Left ventricle myocardium inferior (tissue), 1 donor: ENCODE measurements at regions of chr3 and their contacts with region 1.

Region 1: DNA sequence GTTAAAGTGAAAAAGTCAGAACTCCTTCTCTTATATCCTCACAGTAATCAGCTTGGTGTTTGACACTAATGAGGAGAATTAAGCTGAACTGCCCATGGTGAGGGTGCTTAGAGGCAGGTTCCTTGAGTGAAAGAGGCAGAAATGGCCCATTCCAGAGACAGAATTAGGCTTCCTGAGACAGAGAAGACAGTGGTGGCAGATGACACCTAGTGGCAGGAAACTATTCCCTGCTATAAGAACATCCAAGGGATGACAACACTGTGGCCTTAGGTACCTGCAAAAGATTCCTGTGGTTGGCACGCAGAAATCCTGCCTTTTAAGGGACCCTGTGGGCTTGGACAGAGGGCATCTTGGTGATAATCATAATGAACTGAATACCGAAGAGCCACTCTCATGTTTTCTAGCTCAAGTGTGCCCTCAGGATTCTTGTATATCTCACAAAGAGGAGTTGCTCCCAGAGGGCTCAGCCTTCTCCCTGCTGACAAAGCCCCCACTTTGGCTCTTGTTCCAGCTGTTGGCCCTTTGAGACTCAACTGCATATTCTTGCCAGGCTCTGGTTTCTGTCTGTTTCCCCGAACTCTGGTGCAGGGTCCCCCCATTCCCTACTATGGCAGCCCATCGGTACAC is 56.0 kb downstream of the KBTBD12 start:
- DNase-seq: no peak
- H3K4me3 ChIP-seq: no peak overlapping the region
- H3K27ac ChIP-seq: no peak overlapping the region
- H3K4me1 ChIP-seq: peaks cover 8% of the 10 kb centered on the region
- H3K27me3 ChIP-seq: no peaks in the 10 kb centered on the region
- CTCF ChIP-seq: peak; percentile 79

Region 2: DNA sequence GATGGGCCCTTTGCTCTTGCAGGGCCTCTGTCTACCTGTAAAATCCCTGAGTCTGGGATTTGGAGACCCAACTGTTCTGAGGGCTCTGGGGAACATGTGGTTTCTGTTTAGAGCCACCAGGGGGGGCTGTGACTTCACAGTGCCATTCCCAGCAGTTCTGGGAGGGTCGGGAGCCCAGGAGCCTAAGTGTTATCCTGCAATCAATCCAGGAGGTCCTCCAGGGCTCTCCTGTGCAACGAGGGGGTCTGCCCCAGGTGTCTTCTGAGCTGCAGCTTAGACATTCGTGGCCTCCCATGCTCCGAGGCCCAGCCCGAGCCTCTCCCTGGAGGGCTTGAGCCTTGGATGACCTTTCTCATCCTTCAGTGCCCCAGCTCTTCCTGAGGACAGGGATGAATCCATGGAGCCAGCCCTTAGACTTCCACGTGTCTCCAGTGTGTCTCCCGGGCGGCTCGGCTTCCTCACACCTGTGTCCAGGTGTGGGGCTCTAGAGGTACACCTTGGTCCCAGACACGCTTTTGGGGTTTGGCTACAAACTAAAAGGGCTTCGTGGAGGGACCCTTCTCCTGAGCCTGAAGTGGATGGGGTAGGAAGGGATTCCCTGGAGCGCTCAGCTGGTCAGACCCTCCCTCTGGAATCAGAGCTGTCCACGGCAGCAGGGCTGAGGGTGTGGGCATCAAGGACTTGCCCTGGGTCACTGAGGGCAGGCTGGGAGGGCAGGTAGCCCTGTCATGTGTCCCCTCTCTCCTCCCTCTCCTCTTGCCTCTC is 318.7 kb before region 1 on chr3:
- intact Hi-C with region 1: loop called (anchors 5 kb)
- DNase-seq: peak; percentile 45
- H3K4me3 ChIP-seq: no peak overlapping the region
- H3K27ac ChIP-seq: no peak overlapping the region
- H3K4me1 ChIP-seq: peaks cover 5% of the 10 kb centered on the region
- H3K27me3 ChIP-seq: no peaks in the 10 kb centered on the region
- CTCF ChIP-seq: peak; percentile 96

Region 3: DNA sequence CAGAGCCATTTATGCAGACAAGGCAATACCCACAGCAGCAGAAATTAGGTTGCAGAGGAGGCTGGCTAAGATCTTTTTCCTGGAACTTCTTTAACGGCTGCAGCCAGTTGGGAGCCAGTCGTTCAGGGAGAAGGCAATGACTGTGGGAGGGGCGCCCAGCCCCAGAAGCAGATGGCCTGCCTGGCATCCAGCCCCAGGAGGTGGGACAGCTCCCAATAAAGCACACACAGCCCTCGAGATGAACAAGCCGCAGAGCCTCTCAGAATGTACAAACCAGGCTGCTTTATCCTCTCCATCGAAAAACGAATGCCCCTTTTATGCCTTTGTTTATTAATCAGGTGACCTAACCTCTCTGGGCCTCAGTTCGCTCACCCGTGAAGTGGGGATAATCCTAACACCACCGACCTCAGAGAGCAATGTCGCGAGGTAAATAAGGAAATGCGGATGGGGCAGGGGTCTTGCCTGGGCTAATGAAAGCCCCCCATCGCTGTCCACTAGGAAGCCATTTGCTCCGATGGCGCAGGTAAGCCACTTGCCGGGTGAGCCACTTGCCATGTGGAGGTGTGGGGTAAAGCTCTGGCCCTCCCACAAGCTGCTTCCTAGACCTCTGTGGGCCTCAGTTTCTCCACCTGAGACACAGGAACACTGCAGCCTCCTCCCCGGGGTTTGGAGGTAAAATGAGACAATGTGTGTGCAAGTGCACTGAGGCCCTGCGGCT is 184.6 kb before region 1 on chr3:
- intact Hi-C with region 1: no loop called
- DNase-seq: peak; percentile 89
- H3K4me3 ChIP-seq: peak overlapping the region; percentile 10
- H3K27ac ChIP-seq: peak overlapping the region; percentile 64
- H3K4me1 ChIP-seq: peaks cover 98% of the 10 kb centered on the region
- H3K27me3 ChIP-seq: no peaks in the 10 kb centered on the region
- CTCF ChIP-seq: no peak